Mammary epithelial cell (primary cell): ENCODE measurements at regions of chr2 and their contacts with region 1.

Region 1: GRCh38 chr2:16139663-16140615 is 199.6 kb downstream of the MYCN start:
- DNase-seq: no peak
- H3K4me3 ChIP-seq: no peak overlapping the region
- H3K27ac ChIP-seq: no peak overlapping the region
- H3K4me1 ChIP-seq: peaks cover 18% of the 10 kb centered on the region
- H3K27me3 ChIP-seq: no peaks in the 10 kb centered on the region
- CTCF ChIP-seq: no peak

Region 2: DNA sequence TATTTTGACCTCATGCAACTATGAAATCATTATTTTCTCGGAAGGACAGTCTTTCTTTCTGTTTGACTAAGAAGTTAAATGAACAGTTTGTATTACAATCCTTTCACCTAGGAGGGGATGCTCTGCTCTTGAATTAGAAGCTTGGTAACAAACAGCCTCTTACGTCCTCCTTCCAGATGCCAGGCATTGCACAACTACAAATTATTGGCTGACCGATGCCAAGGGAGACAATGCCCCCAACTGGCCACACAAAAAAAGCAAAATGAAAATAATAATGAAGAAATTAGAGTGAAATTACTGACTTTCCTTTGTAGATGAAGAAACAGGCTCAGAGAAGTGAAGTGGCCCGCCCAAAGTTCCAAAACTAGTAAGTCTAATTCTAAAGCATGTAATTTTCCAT is 347.7 kb after region 1 on chr2:
- CTCF ChIA-PET with region 1: no interaction called
- dilution Hi-C with region 1: no loop called
- in situ Hi-C with region 1: no loop called
- intact Hi-C with region 1: loop called (anchors 10 kb)
- DNase-seq: peak; percentile 21
- H3K4me3 ChIP-seq: no peak overlapping the region
- H3K27ac ChIP-seq: no peak overlapping the region
- H3K4me1 ChIP-seq: no peaks in the 10 kb centered on the region
- H3K27me3 ChIP-seq: peaks cover 2% of the 10 kb centered on the region
- CTCF ChIP-seq: peak; percentile 17 to 52